Common myeloid progenitor, CD34-positive (primary cell): ENCODE measurements at regions of chr6 and their contacts with region 1.

Region 1: GRCh38 chr6:33585403-33586107 is 5.5 kb upstream of the BAK1 start:
- DNase-seq: peak; percentile 84 to 90 (median 88)
- H3K4me3 ChIP-seq: peak overlapping the region in 2 of 7 experiments; percentile 33 to 64
- H3K27ac ChIP-seq: peak overlapping the region in 1 of 2 experiments; percentile 8
- H3K4me1 ChIP-seq: peaks cover 0 to 18% (median 13%) of the 10 kb centered on the region in 4 experiments
- H3K27me3 ChIP-seq: no peaks in the 10 kb centered on the region

Region 2: GRCh38 chr6:32796848-32797776 is 788.4 kb before region 1 on chr6:
- CTCF ChIA-PET with region 1: no interaction called
- POLR2A ChIA-PET with region 1: no interaction called
- DNase-seq: peak; percentile 67 to 89 (median 84)
- H3K4me3 ChIP-seq: peak overlapping the region in 6 of 7 experiments; percentile 52 to 79 (median 61)
- H3K27ac ChIP-seq: no peak overlapping the region
- H3K4me1 ChIP-seq: peaks cover 14 to 43% (median 27%) of the 10 kb centered on the region in 4 experiments
- H3K27me3 ChIP-seq: no peaks in the 10 kb centered on the region

Region 3: DNA sequence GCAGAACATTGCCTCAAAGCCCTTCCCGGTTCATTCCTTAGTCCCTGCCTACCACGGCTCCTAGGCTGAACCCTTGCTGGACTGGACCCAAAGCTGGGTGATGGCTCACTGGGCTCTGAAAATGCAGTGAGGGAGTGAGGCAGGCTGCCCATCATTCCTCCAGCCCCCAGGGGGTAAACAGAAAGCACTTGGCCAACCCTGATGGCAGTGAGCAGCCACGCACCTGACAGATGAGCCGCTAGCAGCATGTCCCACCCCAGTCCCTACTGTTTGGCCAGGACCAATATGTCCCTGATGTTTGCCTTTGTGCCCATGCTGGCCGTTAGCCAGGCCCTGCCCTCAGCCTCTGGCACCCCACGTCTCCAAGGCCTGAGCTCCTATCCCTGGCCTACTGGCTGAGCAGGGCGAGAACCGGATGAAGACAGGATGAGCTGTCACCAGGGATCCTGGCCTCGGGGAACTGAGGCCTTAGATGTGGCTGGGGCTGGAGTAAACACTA is 13.9 kb after region 1 on chr6:
- CTCF ChIA-PET with region 1: interaction called, 13 read pairs
- POLR2A ChIA-PET with region 1: no interaction called
- DNase-seq: no peak
- H3K4me3 ChIP-seq: no peak overlapping the region
- H3K27ac ChIP-seq: no peak overlapping the region
- H3K4me1 ChIP-seq: peaks cover 0 to 5% (median 0%) of the 10 kb centered on the region in 4 experiments
- H3K27me3 ChIP-seq: no peaks in the 10 kb centered on the region

Region 4: DNA sequence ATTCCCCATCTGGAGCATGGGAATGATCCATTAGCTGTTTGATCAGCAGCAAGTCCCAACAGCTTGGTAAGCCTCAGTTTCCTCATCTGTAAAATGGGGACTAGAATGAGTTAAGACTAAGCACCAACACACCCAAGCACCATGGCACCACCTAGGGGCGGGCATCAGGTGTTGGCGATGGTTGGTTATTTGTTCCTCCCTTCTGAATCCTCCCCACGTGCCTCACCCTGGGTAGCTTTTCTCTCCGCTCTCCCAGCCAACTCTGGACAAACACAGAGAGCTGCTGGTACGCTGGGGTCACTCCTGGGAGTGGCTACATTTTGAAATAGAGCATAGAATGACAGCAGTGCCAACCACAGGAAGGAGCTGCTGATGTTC is 22.2 kb after region 1 on chr6:
- CTCF ChIA-PET with region 1: interaction called, 11 read pairs
- POLR2A ChIA-PET with region 1: no interaction called
- DNase-seq: peak in 2 of 3 donors; percentile 42 to 44
- H3K4me3 ChIP-seq: no peak overlapping the region
- H3K27ac ChIP-seq: no peak overlapping the region
- H3K4me1 ChIP-seq: peaks cover 0 to 6% (median 1%) of the 10 kb centered on the region in 4 experiments
- H3K27me3 ChIP-seq: no peaks in the 10 kb centered on the region

Region 5: GRCh38 chr6:33620856-33621710 is 35.5 kb after region 1 on chr6 and contains the start of gene ITPR3:
- CTCF ChIA-PET with region 1: interaction called, 15 read pairs
- POLR2A ChIA-PET with region 1: no interaction called
- DNase-seq: peak; percentile 34 to 66 (median 52)
- H3K4me3 ChIP-seq: peak within 1 kb of the TSS; percentile 65 to 96 (median 69)
- H3K27ac ChIP-seq: peak within 1 kb of the TSS in 1 of 2 experiments; percentile 46
- H3K4me1 ChIP-seq: peaks cover 2 to 26% (median 21%) of the 10 kb centered on the region in 4 experiments
- H3K27me3 ChIP-seq: peaks cover 0 to 16% (median 2%) of the 10 kb centered on the region in 5 experiments

Region 6: GRCh38 chr6:33633462-33634158 is 48.1 kb after region 1 on chr6:
- CTCF ChIA-PET with region 1: interaction called, 58 read pairs
- POLR2A ChIA-PET with region 1: no interaction called
- DNase-seq: peak; percentile 38 to 65 (median 58)
- H3K4me3 ChIP-seq: peak overlapping the region in 6 of 7 experiments; percentile 48 to 83 (median 65)
- H3K27ac ChIP-seq: no peak overlapping the region
- H3K4me1 ChIP-seq: peaks cover 0 to 20% (median 15%) of the 10 kb centered on the region in 4 experiments
- H3K27me3 ChIP-seq: peaks cover 0 to 13% (median 8%) of the 10 kb centered on the region in 5 experiments

Region 7: DNA sequence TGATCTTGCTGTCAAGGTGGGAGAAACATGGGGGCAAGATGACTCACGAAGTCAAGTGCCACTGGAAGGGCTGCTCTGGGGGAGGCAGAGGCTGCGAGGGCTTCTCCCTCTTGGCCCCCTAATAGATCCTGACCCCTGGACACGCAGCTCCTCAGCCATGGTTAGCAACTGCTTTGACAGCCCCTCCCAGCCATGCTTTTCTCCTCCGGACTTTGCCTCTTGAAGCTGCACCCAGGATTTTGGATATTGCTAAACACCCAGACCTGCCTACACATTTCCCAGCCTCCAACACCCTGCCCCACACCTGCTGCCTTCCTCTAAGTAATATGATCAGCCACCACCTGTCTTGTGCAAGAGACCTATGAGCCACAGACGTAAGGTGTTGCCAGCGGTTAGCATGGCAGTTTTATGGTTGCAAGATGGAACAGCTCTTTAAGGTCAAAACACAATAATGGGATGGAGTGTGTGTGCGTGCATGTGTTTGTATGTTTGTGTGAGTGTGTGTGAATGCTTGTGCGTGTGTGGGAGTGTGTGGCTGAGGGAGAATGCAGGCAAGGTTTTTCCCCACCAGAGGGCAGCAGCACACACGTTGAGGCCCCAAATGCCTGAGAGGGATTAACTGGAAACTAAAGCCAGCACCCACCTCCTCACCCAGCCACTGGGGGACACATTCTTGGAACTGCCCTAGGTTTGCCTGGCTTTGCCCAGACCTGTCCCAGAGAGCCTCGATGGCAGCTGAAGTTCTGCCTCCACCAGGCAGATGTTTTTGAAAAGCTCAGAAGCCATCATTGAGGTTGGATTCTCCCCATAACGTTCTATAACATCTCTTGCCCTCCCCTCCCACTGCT is 158.7 kb after region 1 on chr6:
- CTCF ChIA-PET with region 1: interaction called, 15 read pairs
- POLR2A ChIA-PET with region 1: interaction called, 3 read pairs
- DNase-seq: peak; percentile 72 to 88 (median 84)
- H3K4me3 ChIP-seq: no peak overlapping the region
- H3K27ac ChIP-seq: no peak overlapping the region
- H3K4me1 ChIP-seq: peaks cover 0 to 5% (median 0%) of the 10 kb centered on the region in 4 experiments
- H3K27me3 ChIP-seq: peaks cover 0 to 22% (median 0%) of the 10 kb centered on the region in 5 experiments

Region 8: DNA sequence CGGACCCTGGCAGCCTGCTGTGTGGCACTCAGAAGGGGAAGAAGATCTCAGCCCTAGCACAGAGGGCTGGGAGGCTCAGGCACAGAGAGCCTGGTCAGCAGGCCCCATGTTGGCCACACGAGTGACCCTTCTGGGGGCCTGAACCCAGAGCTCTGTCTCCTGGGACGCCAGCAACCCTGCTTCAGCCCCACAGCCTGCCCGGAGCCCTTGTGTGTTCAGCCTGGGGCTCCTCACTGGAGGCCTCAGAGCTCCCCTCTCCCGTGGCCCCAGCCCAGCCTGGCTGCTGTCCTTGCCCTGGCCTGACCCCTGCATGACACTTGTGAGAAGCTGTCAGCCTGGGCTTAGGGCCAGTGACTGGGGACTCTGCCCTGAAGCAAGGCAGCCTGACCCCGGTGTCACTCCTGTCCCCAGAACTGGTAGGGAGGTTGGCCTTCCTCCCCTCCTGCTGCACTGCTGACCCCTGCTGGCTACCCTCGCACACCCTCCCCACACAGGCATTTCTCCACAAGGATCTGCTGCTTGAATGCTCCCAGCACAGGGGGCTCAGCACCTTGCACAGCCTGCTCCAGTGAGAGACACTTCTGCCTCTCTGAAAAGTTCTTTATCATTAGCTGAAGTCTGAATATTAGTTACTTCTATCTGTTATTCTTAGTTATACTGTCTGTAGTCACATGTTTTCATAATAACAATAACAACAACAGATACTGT is 176.5 kb after region 1 on chr6:
- CTCF ChIA-PET with region 1: interaction called, 22 read pairs
- POLR2A ChIA-PET with region 1: no interaction called
- DNase-seq: peak; percentile 60 to 73 (median 64)
- H3K4me3 ChIP-seq: no peak overlapping the region
- H3K27ac ChIP-seq: no peak overlapping the region
- H3K4me1 ChIP-seq: peaks cover 0 to 21% (median 12%) of the 10 kb centered on the region in 4 experiments
- H3K27me3 ChIP-seq: peaks cover 0 to 2% (median 0%) of the 10 kb centered on the region in 5 experiments